K562 (cell line): ENCODE measurements at regions of chr11 and their contacts with region 1.

Region 1: GRCh38 chr11:65888163-65888814 is at the start of gene FIBP:
- DNase-seq: peak; percentile 94 to 99 (median 96)
- ATAC-seq: peak; percentile 67
- H3K4me3 ChIP-seq: peak within 1 kb of the TSS; percentile 69
- H3K27ac ChIP-seq: peak within 1 kb of the TSS; percentile 85
- H3K4me1 ChIP-seq: peaks cover 28 to 62% of the 10 kb centered on the region in 2 experiments
- H3K27me3 ChIP-seq: no peaks in the 10 kb centered on the region
- CTCF ChIP-seq: peak; percentile 91 to 98 (median 93)
- EP300 ChIP-seq: peak; percentile 23; the same call in 1 of the 2 replicates
- POLR2A ChIP-seq: peak; percentile 89
- RAD21 ChIP-seq: peak; percentile 60 to 67
- polyA plus RNA-seq, gene FIBP: 41.2 to 46.2 TPM

Region 2: DNA sequence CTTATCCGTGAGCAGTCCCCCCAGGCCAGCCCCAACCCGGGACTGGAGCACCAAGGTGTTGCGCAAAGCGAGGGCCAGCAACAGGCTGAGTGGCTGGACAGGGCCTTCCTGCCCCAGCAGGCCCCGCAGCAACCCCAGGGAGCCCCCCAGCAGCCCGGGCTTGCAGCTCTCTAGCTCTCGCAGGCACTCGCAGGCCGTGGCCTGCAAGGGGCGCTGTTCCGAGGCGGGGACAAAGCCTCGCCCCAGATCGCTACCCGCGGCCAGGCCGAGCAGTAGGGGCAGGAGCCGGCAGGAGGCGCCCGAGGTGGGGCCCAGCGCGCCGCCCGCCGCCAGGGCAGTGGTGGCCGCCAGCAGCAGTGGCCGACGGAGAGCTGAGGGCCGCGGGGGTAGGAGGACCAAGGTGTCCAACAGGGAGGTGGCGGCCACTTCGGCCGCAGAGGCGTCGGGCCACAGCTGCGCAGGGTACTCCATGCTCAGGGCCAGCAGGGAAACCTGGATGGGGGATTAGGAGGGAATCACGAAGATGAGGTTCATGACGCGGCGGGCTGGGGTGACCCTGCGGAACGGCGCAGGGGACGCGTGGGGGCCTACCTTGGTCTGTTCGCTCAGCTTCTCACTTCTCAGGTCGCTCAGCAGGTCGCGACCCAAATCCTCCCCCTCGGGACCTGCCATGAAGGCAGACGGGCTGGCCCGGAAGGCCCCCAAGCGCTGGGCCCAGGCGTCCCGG is 108.3 kb before region 1 on chr11:
- CTCF ChIA-PET with region 1: interaction called, 3 read pairs
- POLR2A ChIA-PET with region 1: interaction called, 7 read pairs
- in situ Hi-C with region 1: no loop called
- intact Hi-C with region 1: loop called (anchors 5 kb)
- DNase-seq: peak; percentile 84 to 92 (median 87)
- ATAC-seq: peak; percentile 92
- H3K4me3 ChIP-seq: peak overlapping the region; percentile 86
- H3K27ac ChIP-seq: peak overlapping the region; percentile 95
- H3K4me1 ChIP-seq: peaks cover 7 to 48% of the 10 kb centered on the region in 2 experiments; a peak in 4 of 5 replicates
- H3K27me3 ChIP-seq: no peaks in the 10 kb centered on the region
- CTCF ChIP-seq: peak; percentile 96 to 100 (median 99)
- EP300 ChIP-seq: no peak
- POLR2A ChIP-seq: peak; percentile 85
- RAD21 ChIP-seq: peak; percentile 86 to 90

Region 3: DNA sequence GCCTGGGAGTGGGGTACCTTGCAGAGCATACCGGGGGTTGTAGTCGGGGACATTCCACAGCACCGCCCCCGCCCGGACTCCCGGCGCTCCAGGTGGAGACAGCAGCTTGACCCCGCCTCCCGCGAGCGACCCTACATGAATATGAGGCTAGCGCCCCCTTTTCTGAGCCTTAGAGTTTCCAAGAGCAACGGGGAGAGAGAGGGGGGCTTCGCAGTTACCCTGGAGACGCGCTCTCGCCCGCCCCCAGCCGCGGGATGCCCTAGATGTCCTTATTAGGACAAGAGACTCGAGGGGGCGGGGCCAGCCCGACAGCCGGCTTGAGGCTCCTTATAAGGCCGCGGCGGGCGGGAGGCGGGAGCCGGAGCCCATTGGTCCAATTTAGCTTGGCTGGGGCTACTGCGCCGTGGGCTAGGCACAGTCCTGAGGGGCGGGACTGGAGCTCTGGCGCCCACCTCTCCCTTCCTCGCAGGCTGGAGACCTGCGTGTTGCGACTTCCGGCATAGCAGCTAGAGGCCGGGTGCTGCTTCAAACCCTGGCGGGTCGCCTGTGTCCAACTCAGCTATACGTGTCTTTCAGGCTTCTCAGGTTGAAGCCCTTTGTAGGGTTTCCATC is 29.0 kb before region 1 on chr11:
- CTCF ChIA-PET with region 1: interaction called, 4 read pairs
- POLR2A ChIA-PET with region 1: interaction called, 96 read pairs
- in situ Hi-C with region 1: no loop called
- intact Hi-C with region 1: loop called (anchors 1 kb)
- DNase-seq: peak; percentile 82 to 100 (median 89)
- ATAC-seq: peak; percentile 80
- H3K4me3 ChIP-seq: peak overlapping the region; percentile 95
- H3K27ac ChIP-seq: peak overlapping the region; percentile 96
- H3K4me1 ChIP-seq: peaks cover 14 to 73% of the 10 kb centered on the region in 2 experiments
- H3K27me3 ChIP-seq: no peaks in the 10 kb centered on the region; a peak in 1 of 5 replicates
- CTCF ChIP-seq: peak; percentile 12 to 31 (median 19); a peak in 3 of 6 replicates
- EP300 ChIP-seq: 0 out of 2 replicates have a peak, but pooled peaks have one; percentile 10
- POLR2A ChIP-seq: peak; percentile 98
- RAD21 ChIP-seq: no peak

Region 4: DNA sequence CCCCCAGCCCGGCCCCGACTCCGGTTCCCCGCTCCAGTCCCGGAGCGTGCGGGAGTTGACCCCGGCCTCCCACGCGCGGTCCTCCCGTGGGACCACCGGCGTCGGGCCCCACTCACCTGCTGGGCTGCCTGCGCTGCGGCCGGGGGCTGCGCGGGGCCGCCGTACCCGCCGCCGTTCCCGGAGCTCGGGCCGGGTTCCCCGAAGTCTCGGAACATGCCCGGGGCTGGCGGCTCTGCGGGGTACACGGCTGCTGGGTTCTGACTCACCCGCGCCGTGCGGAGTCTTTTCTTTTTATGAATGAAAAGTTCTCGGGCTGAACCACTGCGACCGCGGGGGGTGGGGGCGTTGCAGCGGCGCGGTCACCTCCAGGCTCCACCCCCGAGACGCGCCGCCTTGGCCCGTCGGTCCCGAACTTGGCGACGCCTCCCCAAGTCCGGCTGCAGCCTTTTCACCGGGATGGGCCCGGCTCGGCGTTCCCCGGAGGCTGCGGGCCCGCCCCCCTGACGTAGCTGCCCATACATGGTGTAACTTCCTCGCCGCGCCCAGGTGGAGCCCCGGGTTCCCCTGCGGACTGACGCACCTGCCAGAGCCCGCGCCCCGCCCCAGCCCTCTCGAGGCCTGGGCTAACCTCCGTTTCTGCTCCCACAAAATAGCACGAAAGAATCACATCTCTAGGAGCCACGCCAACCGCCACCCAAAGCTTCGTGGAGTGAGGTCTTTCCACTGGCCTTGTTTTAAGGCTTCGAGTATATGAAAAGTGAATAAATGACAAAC is 12.0 kb after region 1 on chr11 and contains the start of gene FOSL1:
- CTCF ChIA-PET with region 1: interaction called, 3 read pairs
- POLR2A ChIA-PET with region 1: interaction called, 136 read pairs
- in situ Hi-C with region 1: no loop called
- intact Hi-C with region 1: no loop called
- DNase-seq: peak; percentile 89 to 97 (median 92)
- ATAC-seq: peak; percentile 90
- H3K4me3 ChIP-seq: peak within 1 kb of the TSS; percentile 89
- H3K27ac ChIP-seq: peak within 1 kb of the TSS; percentile 100
- H3K4me1 ChIP-seq: peaks cover 42 to 70% of the 10 kb centered on the region in 2 experiments
- H3K27me3 ChIP-seq: no peaks in the 10 kb centered on the region
- CTCF ChIP-seq: no peak
- EP300 ChIP-seq: peak; percentile 39; the same call in 1 of the 2 replicates
- POLR2A ChIP-seq: peak; percentile 97
- RAD21 ChIP-seq: 0 out of 4 replicates have a peak, but pooled peaks of 1 of the 2 experiments have one; percentile 7
- polyA plus RNA-seq, gene FOSL1: 3.5 to 4.2 TPM

Region 5: DNA sequence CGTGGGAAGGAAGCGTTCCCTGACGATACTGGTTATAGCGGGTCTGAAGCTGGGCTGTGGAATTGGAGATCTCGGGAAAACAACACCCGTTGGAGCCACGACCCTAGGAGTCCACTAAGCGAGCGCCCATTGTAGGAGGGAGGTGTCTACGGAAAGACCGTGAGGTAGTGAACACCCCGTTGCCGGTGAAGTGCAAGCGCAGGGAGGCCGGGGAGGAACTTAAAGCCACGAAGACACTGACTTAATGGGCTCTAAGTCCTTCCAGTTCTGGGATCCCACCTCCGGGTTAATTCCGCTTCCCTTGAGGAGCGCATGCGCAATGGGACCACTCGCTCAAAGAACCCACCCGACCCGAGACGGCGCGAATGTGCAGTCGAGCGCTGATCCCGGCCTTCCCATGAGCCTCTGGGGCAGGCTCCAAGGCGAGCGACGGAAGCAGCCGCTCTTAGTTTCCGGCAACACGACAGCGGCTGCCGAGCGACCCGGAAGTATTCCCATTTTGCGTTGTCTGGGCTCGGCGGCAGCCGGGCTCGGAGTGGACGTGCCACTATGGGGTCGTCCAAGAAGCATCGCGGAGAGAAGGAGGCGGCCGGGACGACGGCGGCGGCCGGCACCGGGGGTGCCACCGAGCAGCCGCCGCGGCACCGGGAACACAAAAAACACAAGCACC is 73.1 kb after region 1 on chr11 and contains the start of gene SART1:
- CTCF ChIA-PET with region 1: no interaction called
- POLR2A ChIA-PET with region 1: interaction called, 13 read pairs
- in situ Hi-C with region 1: no loop called
- intact Hi-C with region 1: loop called (anchors 2 kb)
- DNase-seq: peak; percentile 95 to 99 (median 97)
- ATAC-seq: peak; percentile 97
- H3K4me3 ChIP-seq: peak within 1 kb of the TSS; percentile 100
- H3K27ac ChIP-seq: peak within 1 kb of the TSS; percentile 96
- H3K4me1 ChIP-seq: peaks cover 12 to 39% of the 10 kb centered on the region in 2 experiments; a peak in 4 of 5 replicates
- H3K27me3 ChIP-seq: no peaks in the 10 kb centered on the region
- CTCF ChIP-seq: no peak
- EP300 ChIP-seq: peak; percentile 64; the same call in 1 of the 2 replicates
- POLR2A ChIP-seq: peak; percentile 96
- RAD21 ChIP-seq: no peak; a peak in 2 of 4 replicates
- polyA plus RNA-seq, gene SART1: 4.8 to 7.2 TPM